OCI-LY7 (cell line): ENCODE measurements at regions of chr5 and their contacts with region 1.

Region 1: GRCh38 chr5:32709781-32710549 is 1.2 kb upstream of the NPR3 start:
- DNase-seq: no peak
- H3K4me3 ChIP-seq: no peak overlapping the region
- H3K27ac ChIP-seq: no peak overlapping the region
- H3K4me1 ChIP-seq: no peaks in the 10 kb centered on the region
- CTCF ChIP-seq: no peak

Region 2: DNA sequence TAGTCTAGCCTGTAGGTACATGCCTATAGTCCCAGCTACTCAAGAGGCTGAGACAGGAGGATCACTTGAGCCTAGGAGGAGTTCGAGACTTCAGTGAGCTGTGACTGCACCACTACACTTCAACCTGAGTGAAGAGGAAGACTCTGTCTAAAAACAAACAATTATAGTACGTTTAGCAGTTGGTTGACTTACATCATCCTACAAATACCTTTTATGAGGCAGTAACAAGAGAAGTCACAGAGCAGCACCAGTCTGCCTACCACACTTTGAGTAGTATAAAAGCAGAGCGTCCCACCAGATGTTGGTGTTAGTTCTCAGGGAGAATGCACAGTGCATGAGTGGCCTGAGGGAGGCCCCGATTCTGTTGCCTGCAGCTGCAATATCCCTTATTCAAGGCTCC is 281.5 kb before region 1 on chr5:
- CTCF ChIA-PET with region 1: no interaction called
- POLR2A ChIA-PET with region 1: no interaction called
- intact Hi-C with region 1: no loop called
- DNase-seq: no peak
- H3K4me3 ChIP-seq: no peak overlapping the region
- H3K27ac ChIP-seq: no peak overlapping the region
- H3K4me1 ChIP-seq: no peaks in the 10 kb centered on the region
- CTCF ChIP-seq: no peak

Region 3: DNA sequence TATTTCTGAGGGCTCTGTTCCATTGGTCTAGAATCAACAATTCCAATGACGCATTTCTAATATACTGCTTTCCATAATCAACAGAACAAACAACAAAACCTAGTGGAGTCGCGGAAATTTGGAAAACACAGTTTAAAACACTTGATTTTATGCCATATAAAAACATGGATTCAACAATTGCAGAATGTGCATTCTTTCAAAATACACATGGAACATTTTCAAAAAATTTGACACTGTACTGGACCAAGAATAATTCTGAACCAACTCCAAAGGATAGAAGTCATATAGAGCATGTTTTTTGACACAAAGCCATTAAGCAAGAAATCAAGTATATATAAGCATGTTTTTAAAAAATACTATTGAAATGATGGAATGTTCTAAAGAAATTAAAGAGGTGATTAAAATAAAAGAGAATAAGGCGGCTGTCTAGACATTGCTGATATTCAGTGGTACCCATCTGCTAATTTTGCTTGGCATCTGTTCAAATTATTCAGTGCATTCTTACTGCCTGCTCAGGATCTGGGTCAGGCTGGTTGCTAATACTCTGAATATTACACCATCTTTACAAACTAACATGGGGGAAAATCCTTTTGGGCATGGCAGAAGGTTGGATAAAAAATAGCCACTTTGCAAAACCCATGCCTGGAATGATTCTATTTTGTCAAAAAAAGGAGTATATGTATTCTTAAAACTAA is 222.4 kb after region 1 on chr5:
- CTCF ChIA-PET with region 1: no interaction called
- POLR2A ChIA-PET with region 1: no interaction called
- intact Hi-C with region 1: loop called (anchors 10 kb)
- DNase-seq: no peak
- H3K4me3 ChIP-seq: no peak overlapping the region
- H3K27ac ChIP-seq: no peak overlapping the region
- H3K4me1 ChIP-seq: no peaks in the 10 kb centered on the region
- CTCF ChIP-seq: no peak

Region 4: DNA sequence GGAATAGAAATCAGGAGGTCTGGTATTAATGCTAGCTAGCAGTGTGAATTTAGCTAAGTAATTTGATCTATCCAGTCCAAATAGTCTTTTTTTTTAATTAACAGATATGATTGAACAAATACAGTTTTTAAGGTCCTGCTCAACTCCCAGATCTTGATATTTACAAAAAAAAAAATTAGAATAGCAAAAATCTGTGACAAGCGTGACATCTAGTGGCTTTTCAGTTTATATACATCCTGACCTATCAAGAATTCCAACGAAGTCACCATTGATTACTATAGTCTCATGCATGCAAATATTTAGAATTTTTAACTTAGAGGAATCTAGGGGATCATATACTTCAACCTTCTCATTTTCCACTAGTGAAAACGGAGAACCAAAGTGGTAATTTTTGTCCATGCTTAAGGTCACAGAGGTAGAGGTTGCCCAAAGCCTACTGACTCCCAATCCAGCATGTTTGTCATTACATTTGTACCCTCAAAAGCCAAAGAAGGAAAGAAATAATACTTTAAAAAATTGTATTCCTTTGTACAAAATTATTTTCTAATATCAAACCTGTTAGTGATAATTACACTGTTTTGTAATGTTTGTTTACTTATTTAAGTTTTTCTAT is 713.2 kb after region 1 on chr5:
- CTCF ChIA-PET with region 1: no interaction called
- POLR2A ChIA-PET with region 1: no interaction called
- intact Hi-C with region 1: loop called (anchors 10 kb)
- DNase-seq: peak; percentile 39
- H3K4me3 ChIP-seq: no peak overlapping the region
- H3K27ac ChIP-seq: no peak overlapping the region
- H3K4me1 ChIP-seq: peaks cover 8% of the 10 kb centered on the region
- CTCF ChIP-seq: peak; percentile 87